AG04450 (cell line): ENCODE measurements at regions of chr5 and their contacts with region 1.

Region 1: DNA sequence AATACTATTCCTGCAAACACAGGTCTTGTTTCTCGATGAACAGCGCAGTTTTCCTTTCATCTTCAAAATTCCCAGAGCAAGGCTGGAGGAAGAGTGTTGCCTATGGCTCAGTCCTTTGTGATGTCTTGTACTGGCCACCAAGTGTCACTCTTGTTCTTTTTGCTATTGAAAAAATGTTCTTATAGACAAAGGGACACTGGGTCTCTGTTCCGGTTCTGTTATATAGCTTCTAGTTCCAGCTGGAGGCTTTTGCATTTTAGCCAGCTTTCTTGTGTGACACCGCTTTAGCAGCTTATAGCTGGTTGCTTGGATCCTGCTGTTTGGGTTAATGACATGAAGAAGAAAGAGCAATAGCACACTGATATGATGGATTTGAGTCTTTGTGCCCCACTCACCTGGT is 343.7 kb upstream of the KCNN2 start:
- DNase-seq: no peak
- H3K4me3 ChIP-seq: no peak overlapping the region
- H3K27ac ChIP-seq: no peak overlapping the region
- H3K27me3 ChIP-seq: no peaks in the 10 kb centered on the region
- CTCF ChIP-seq: no peak

Region 2: GRCh38 chr5:114305402-114306211 is 287.4 kb after region 1 on chr5:
- CTCF ChIA-PET with region 1: interaction called, 12 read pairs
- POLR2A ChIA-PET with region 1: no interaction called
- DNase-seq: peak; percentile 30
- H3K4me3 ChIP-seq: no peak overlapping the region
- H3K27ac ChIP-seq: no peak overlapping the region
- H3K27me3 ChIP-seq: no peaks in the 10 kb centered on the region
- CTCF ChIP-seq: peak; percentile 78